CD8-positive, alpha-beta T cell (primary cell): ENCODE measurements at regions of chr2 and their contacts with region 1.

Region 1: GRCh38 chr2:128027801-128028667 is at the start of gene SAP130:
- DNase-seq: peak; percentile 95 to 99 (median 98)
- ATAC-seq: peak; percentile 75
- H3K4me3 ChIP-seq: peak within 1 kb of the TSS; percentile 82 to 89
- H3K4me3 Mint-ChIP-seq: peak within 1 kb of the TSS; percentile 97
- H3K27ac ChIP-seq: peak within 1 kb of the TSS; percentile 79 to 85
- H3K27ac Mint-ChIP-seq: peak within 1 kb of the TSS; percentile 92
- H3K4me1 ChIP-seq: peaks cover 12% of the 10 kb centered on the region
- H3K4me1 Mint-ChIP-seq: peaks cover 23% of the 10 kb centered on the region
- H3K27me3 ChIP-seq: no peaks in the 10 kb centered on the region
- H3K27me3 Mint-ChIP-seq: no peaks in the 10 kb centered on the region
- CTCF ChIP-seq: no peak
- total RNA-seq, gene SAP130: 17.8 to 18.9 TPM

Region 2: DNA sequence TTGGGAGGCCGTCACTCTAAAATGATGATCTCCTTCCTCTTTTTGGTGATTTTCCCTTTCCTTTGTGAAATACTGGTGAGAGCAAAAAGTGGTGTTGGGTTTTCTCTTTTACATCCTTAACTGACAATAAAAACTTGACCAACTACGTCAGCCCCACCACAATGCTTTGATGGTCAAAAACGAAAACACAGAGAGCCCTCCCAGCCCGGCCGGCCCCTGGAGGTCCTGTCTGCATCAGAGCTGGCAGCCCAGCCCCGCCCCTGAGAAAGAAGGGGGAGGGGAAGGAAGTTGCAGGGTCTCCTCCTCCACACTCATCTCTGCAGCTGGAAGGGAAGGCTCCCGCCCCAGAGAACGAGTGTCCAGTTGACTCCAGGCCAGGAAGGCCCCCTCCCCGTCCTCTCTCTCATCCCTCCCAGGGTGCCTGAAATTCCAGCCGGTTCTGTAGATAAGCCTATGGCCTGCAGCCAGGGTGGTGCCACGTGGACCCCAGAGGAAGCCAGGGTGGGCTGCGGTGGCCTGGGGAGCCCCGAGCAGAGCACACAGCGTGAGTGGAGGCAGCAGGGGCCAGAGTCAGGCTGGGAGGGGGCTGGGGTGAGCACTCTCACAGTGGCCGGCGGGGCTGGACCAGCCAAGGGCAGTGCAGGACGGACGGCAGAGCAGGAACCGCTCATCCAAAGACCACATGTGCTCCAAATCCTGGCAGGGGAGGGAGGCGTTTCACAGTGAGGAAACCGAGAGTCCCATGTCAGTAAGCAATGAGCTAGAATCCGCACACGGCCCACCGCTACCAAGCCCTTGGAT is 940.8 kb before region 1 on chr2:
- CTCF ChIA-PET with region 1: no interaction called
- POLR2A ChIA-PET with region 1: no interaction called
- intact Hi-C with region 1: loop called in 1 of 2 experiments (anchors 10 kb)
- DNase-seq: no peak
- ATAC-seq: no peak
- H3K4me3 ChIP-seq: no peak overlapping the region
- H3K4me3 Mint-ChIP-seq: no peak overlapping the region
- H3K27ac ChIP-seq: peak overlapping the region in 1 of 2 experiments; percentile 51
- H3K27ac Mint-ChIP-seq: peak overlapping the region; percentile 84
- H3K4me1 ChIP-seq: peaks cover 53% of the 10 kb centered on the region
- H3K4me1 Mint-ChIP-seq: peaks cover 49% of the 10 kb centered on the region
- H3K27me3 ChIP-seq: no peaks in the 10 kb centered on the region
- H3K27me3 Mint-ChIP-seq: no peaks in the 10 kb centered on the region
- CTCF ChIP-seq: no peak

Region 3: DNA sequence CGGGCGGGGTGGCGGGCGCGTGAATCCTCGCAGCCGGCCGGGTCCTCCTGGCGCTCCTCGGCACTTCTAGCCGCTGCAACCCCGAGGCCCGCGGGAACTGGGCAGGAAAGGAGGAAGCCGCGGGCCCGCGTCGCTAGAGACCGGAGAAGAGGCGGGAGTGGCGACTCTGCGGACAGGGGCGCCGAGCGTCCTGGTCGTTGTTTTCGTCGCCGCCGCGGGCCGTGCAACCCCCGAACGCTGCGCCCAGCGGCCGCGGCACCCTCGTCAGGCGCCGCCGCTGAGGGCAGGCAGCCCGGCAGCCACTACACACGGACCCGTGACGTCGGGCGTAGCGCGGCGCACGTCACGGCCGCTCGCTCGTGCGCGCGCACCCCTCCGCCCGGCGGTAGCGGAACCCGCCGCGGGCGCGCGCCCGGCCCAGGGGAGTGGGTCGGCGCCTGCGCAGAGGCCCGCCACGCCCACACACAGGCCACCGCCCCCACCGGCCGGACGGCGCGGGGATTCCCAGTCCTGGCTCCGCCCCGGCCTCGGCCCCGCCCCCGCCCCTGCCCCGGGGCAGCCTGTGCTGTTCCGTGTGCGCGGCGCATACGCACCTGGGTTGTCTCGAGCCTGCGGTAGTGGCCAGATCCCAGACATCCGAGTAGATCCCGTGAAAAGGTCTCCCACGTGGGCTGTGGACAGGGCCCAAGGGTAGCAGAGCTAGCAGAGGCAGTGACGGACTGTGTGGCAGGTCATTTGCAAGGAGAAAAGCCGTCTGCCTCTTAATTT is 640.2 kb before region 1 on chr2 and contains the start of gene MAP3K2:
- CTCF ChIA-PET with region 1: no interaction called
- POLR2A ChIA-PET with region 1: no interaction called
- intact Hi-C with region 1: loop called (anchors 5 kb)
- DNase-seq: peak; percentile 90 to 98 (median 97)
- ATAC-seq: peak; percentile 72
- H3K4me3 ChIP-seq: peak within 1 kb of the TSS; percentile 79 to 81
- H3K4me3 Mint-ChIP-seq: peak within 1 kb of the TSS; percentile 86
- H3K27ac ChIP-seq: peak within 1 kb of the TSS; percentile 99
- H3K27ac Mint-ChIP-seq: peak within 1 kb of the TSS; percentile 99
- H3K4me1 ChIP-seq: peaks cover 36% of the 10 kb centered on the region
- H3K4me1 Mint-ChIP-seq: peaks cover 63% of the 10 kb centered on the region
- H3K27me3 ChIP-seq: no peaks in the 10 kb centered on the region
- H3K27me3 Mint-ChIP-seq: no peaks in the 10 kb centered on the region
- CTCF ChIP-seq: no peak
- total RNA-seq, gene MAP3K2: 126 to 137 TPM

Region 4: GRCh38 chr2:127701193-127701650 is 326.8 kb before region 1 on chr2 and contains the start of gene SFT2D3:
- CTCF ChIA-PET with region 1: no interaction called
- POLR2A ChIA-PET with region 1: no interaction called
- intact Hi-C with region 1: loop called (anchors 2 to 5 kb)
- DNase-seq: peak; percentile 80 to 95 (median 89)
- ATAC-seq: peak; percentile 72
- H3K4me3 ChIP-seq: peak within 1 kb of the TSS; percentile 75 to 98
- H3K4me3 Mint-ChIP-seq: peak within 1 kb of the TSS; percentile 93
- H3K27ac ChIP-seq: peak within 1 kb of the TSS; percentile 92 to 96
- H3K27ac Mint-ChIP-seq: peak within 1 kb of the TSS; percentile 99
- H3K4me1 ChIP-seq: peaks cover 39% of the 10 kb centered on the region
- H3K4me1 Mint-ChIP-seq: peaks cover 46% of the 10 kb centered on the region
- H3K27me3 ChIP-seq: no peaks in the 10 kb centered on the region
- H3K27me3 Mint-ChIP-seq: no peaks in the 10 kb centered on the region
- CTCF ChIP-seq: no peak
- total RNA-seq, gene SFT2D3: 8.2 to 8.5 TPM

Region 5: GRCh38 chr2:127735537-127736399 is 292.3 kb before region 1 on chr2:
- CTCF ChIA-PET with region 1: no interaction called
- POLR2A ChIA-PET with region 1: no interaction called
- intact Hi-C with region 1: no loop called
- DNase-seq: no peak
- ATAC-seq: no peak
- H3K4me3 ChIP-seq: no peak overlapping the region
- H3K4me3 Mint-ChIP-seq: no peak overlapping the region
- H3K27ac ChIP-seq: no peak overlapping the region
- H3K27ac Mint-ChIP-seq: no peak overlapping the region
- H3K4me1 ChIP-seq: no peaks in the 10 kb centered on the region
- H3K4me1 Mint-ChIP-seq: no peaks in the 10 kb centered on the region
- H3K27me3 ChIP-seq: no peaks in the 10 kb centered on the region
- H3K27me3 Mint-ChIP-seq: no peaks in the 10 kb centered on the region
- CTCF ChIP-seq: no peak

Region 6: DNA sequence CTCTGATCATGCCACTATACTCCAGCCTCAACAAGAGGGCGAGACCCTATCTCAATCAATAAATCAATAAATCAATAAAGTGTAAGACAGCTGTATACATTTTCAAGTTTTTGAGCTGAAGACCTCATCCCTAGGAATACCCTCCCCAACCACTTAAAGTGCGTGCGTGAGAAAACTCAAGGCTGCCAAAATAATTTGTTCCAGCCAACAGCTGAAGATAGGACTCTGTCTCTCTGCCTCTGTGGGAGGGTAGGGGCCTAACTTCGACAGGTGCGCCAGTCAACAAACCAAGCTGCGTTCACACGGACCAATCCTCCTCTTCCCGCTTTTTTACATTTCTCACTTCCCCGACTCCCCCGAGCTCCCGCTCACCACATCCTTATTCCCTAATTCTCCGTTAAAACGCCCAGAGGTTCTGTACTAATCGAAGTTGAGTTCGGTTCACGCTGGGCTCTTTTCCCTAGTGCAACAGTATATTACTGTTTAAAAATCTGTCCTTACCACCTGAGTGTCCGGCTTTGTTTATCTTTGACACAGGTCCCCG is 170.7 kb before region 1 on chr2:
- CTCF ChIA-PET with region 1: interaction called, 3 read pairs
- POLR2A ChIA-PET with region 1: no interaction called
- intact Hi-C with region 1: loop called (anchors 1 kb)
- DNase-seq: peak in 3 of 9 experiments; percentile 11 to 44 (median 22)
- ATAC-seq: no peak
- H3K4me3 ChIP-seq: peak overlapping the region; percentile 83 to 94
- H3K4me3 Mint-ChIP-seq: peak overlapping the region; percentile 90
- H3K27ac ChIP-seq: peak overlapping the region; percentile 76 to 82
- H3K27ac Mint-ChIP-seq: peak overlapping the region; percentile 85
- H3K4me1 ChIP-seq: peaks cover 28% of the 10 kb centered on the region
- H3K4me1 Mint-ChIP-seq: peaks cover 51% of the 10 kb centered on the region
- H3K27me3 ChIP-seq: no peaks in the 10 kb centered on the region
- H3K27me3 Mint-ChIP-seq: no peaks in the 10 kb centered on the region
- CTCF ChIP-seq: no peak

Region 7: DNA sequence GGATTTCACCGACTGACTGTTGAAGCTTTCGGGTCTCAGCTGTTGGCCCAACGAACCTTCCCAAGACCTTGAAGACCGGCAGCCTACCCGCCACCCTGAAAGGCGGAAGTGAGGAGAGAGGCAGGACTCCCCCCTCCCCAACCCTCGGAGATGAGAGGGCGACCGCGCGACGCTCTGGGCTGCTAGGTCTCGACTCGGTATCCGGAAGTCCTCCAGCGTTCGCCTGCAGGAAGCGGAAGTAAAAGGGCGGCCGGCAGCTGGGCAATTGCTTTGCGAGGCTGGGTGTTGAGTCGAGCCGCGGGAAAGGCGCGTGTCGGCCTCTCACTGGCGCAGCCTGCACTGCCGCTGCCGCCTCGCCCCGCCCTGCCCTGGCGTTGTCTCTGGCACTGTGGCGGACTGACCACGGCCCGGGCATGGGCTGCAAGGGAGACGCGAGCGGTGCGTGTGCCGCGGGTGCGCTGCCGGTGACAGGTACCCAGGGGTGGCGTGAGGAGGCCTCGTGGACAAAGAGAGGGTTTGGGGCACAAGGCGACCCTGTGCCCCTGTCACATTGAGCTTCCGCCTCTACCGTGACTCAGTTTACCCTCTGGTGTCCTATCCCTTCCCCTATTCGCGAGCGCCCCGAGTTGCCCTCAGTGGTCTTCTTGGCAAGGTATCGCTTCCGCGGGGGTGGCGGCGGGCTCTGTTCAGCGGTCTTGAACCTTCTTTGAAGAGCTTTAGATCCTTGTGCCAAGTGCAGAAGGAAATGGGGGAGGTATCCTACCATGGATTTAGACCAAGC is 63.1 kb after region 1 on chr2 and contains the start of gene UGGT1:
- CTCF ChIA-PET with region 1: interaction called, 6 read pairs
- POLR2A ChIA-PET with region 1: interaction called, 26 read pairs
- intact Hi-C with region 1: loop called (anchors 1 kb)
- DNase-seq: peak; percentile 87 to 98 (median 94)
- ATAC-seq: peak; percentile 97
- H3K4me3 ChIP-seq: peak within 1 kb of the TSS; percentile 86 to 94
- H3K4me3 Mint-ChIP-seq: peak within 1 kb of the TSS; percentile 90
- H3K27ac ChIP-seq: peak within 1 kb of the TSS; percentile 60 to 89
- H3K27ac Mint-ChIP-seq: peak within 1 kb of the TSS; percentile 95
- H3K4me1 ChIP-seq: peaks cover 5% of the 10 kb centered on the region
- H3K4me1 Mint-ChIP-seq: peaks cover 49% of the 10 kb centered on the region
- H3K27me3 ChIP-seq: no peaks in the 10 kb centered on the region
- H3K27me3 Mint-ChIP-seq: no peaks in the 10 kb centered on the region
- CTCF ChIP-seq: no peak
- total RNA-seq, gene UGGT1: 25.6 to 25.9 TPM

Region 8: DNA sequence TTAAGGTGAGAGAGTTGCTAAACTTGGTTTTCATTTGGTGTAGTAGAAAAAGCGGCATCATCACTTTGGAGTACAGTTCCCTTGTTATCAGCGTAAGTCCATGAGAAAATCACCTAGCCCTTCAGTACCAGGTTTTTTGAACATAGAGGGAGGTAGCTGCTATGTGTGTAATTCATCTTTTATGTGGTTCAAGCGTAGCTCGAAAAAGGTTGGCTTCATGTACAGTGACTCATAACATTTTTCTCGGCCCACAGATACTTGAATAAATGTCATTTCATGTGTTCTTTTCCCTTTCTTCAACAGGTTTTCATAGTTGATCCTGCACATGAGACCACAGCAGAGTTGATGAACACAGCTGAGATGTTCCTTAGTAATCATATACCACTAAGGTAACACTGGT is 106.5 kb after region 1 on chr2:
- CTCF ChIA-PET with region 1: no interaction called
- POLR2A ChIA-PET with region 1: no interaction called
- intact Hi-C with region 1: no loop called
- DNase-seq: no peak
- ATAC-seq: no peak
- H3K4me3 ChIP-seq: no peak overlapping the region
- H3K4me3 Mint-ChIP-seq: no peak overlapping the region
- H3K27ac ChIP-seq: no peak overlapping the region
- H3K27ac Mint-ChIP-seq: no peak overlapping the region
- H3K4me1 ChIP-seq: no peaks in the 10 kb centered on the region
- H3K4me1 Mint-ChIP-seq: no peaks in the 10 kb centered on the region
- H3K27me3 ChIP-seq: no peaks in the 10 kb centered on the region
- H3K27me3 Mint-ChIP-seq: no peaks in the 10 kb centered on the region
- CTCF ChIP-seq: no peak

Region 9: DNA sequence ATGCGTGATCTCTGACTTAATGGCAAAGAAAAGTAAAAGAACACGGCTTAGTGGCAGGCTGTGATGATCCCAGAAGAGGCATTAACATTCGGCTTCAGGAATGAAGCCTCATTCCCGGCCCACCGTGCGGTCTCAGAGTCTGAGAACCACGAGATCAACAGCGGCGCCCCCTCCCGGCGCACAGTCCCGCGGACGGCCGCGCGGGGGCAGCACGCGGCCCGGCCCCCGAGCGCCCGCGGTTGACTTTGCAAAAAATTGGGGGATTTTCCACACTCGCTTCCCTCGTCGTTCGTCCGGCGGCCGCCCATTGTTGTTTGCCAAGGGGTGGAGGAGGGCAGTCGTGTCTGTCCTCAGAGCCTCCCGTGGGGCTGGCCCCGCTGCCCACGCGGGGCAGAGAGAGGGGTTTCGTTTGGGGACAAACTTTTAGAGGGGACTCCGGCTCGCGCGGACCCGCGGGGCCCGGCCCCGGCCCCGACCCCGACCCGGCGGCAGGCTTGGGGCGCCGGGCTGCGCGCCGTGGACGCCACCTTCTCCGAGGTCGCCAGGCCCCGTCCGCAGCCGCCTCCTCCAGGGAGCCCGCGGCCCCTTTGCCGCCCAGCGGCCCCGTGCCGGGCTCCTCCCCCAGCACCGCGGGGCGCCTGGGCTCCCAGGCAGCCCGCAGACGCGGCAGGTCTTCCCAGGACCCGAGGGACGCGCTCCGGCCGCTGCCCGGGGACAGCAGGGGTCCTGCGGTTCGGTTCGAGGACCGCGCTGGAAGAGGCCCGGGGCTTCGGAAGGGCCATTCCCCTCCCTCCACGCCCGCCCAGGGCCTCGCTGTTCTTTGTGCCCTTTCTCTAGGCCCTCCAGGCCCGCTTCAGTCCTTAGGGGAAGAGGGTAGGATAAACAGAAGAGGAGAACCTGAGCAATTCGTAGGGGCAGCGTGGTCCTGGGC is 294.0 kb after region 1 on chr2:
- CTCF ChIA-PET with region 1: no interaction called
- POLR2A ChIA-PET with region 1: no interaction called
- intact Hi-C with region 1: loop called (anchors 2 to 5 kb)
- DNase-seq: peak; percentile 66 to 89 (median 80)
- ATAC-seq: peak; percentile 68
- H3K4me3 ChIP-seq: peak overlapping the region; percentile 48 to 76
- H3K4me3 Mint-ChIP-seq: peak overlapping the region; percentile 74
- H3K27ac ChIP-seq: peak overlapping the region in 1 of 2 experiments; percentile 35
- H3K27ac Mint-ChIP-seq: no peak overlapping the region
- H3K4me1 ChIP-seq: peaks cover 15% of the 10 kb centered on the region
- H3K4me1 Mint-ChIP-seq: peaks cover 14% of the 10 kb centered on the region
- H3K27me3 ChIP-seq: peaks cover 0 to 3% of the 10 kb centered on the region in 2 experiments
- H3K27me3 Mint-ChIP-seq: no peaks in the 10 kb centered on the region
- CTCF ChIP-seq: peak; percentile 94